Cardiac septum (tissue), 1 donor: ENCODE measurements at regions of chr1 and their contacts with region 1.

Region 1: GRCh38 chr1:17909634-17910033 is 154.5 kb downstream of the ACTL8 start:
- DNase-seq: peak; percentile 69

Region 2: DNA sequence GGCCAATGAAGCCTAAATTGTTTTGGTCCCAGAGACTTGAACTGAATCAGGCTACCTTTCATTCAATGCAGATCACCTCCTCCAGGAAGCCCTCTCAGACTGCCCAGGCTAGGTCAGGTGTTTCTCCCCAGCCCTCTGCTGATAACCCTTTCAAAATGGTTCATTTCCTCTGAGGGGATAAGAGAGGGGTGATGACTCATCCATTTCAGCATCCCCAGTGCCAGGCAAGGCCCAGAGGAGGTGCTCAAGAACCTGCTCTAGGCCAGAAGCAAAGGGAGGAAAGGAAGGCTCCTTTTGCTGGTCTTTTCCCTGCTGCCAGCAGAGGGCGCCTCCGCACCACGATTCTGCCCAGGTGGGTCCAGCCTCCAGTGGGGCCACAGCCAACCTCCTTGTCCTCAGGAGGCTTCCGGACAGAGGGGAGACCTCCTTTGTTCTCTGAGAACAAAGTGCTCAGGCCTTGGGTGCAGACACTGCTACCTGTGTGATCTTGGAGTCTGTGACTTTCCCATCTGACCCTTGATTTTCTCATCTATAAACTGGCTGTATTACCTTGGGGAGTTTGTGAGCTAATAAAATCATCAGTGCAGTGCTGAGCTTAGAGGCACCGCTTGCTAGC is 415.4 kb before region 1 on chr1:
- intact Hi-C with region 1: loop called (anchors 10 kb)
- DNase-seq: peak; percentile 82

Region 3: GRCh38 chr1:17661546-17662157 is 248.0 kb before region 1 on chr1:
- intact Hi-C with region 1: loop called (anchors 5 kb)
- DNase-seq: no peak